Ascending aorta (tissue), 2 donors: ENCODE measurements at regions of chr1 and their contacts with region 1.

Region 1: DNA sequence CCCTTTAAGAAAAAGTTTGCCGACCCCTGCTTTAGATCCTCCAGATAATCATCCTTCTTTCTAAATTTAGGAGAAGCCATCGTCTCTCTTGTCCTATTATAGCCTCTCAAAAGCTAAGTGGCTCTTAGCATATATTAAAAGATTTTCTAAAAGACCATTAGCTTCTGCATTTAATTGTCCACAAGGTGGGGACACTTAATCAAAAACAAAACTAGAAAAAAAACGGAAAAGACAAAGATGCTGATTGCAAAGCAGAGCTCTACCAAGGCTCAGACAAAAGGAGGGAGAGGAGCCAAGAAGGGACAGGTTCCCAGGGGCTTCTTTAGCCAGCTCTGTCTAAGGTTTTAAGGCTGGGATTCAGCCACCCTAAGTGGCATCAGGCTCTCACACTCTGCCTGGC is 128.3 kb upstream of the HMGB4 start:
- DNase-seq: no peak
- H3K4me3 ChIP-seq: no peak overlapping the region
- H3K27ac ChIP-seq: no peak overlapping the region
- H3K4me1 ChIP-seq: no peaks in the 10 kb centered on the region
- H3K27me3 ChIP-seq: no peaks in the 10 kb centered on the region
- CTCF ChIP-seq: peak in 2 of 3 experiments; percentile 7 to 54

Region 2: GRCh38 chr1:33709783-33710718 is 25.6 kb before region 1 on chr1:
- intact Hi-C with region 1: no loop called
- DNase-seq: no peak
- H3K4me3 ChIP-seq: no peak overlapping the region
- H3K27ac ChIP-seq: no peak overlapping the region
- H3K4me1 ChIP-seq: no peaks in the 10 kb centered on the region
- H3K27me3 ChIP-seq: no peaks in the 10 kb centered on the region
- CTCF ChIP-seq: no peak

Region 3: DNA sequence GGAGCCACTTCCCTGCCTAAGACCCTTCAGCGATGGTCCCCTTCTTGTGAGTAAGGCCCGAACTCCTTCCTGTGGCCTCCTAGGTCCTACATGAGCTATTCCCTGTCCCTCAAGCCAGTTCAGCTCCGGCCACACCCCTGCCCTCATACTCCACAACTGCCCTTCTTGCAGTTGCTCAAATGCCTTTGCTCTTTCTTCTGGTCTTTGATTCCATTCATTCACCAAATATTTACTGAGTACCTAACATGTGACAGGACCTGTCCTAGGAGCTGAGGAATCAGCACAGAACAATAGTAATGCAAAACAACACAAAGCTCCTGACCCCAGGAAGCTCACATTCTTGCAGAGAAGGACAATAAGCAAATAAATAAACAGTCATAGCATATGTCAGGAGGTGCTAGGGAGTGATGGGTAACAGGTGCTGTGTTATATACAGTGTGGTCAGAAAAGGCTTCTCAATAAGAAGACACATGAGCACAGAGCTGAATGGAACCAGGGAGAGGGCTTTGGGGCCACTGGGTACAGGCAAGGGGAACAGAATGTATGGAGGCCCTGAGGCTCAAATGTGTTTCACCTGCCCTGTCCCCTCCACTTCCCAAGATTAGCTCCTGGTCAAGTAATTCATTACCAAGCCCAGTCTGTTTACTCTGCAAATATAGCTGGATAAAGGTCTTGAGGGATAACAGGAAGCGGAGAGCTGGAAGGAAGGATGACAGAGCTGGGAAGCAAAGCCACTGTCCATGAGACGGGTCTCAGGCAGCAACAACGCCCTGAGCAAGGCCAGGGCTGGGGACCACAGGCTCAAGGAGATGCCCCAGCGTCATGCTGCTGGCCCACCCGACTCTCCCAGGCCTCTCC is 284.3 kb after region 1 on chr1:
- intact Hi-C with region 1: loop called (anchors 5 kb)
- DNase-seq: no peak
- H3K4me3 ChIP-seq: no peak overlapping the region
- H3K27ac ChIP-seq: no peak overlapping the region
- H3K4me1 ChIP-seq: no peaks in the 10 kb centered on the region
- H3K27me3 ChIP-seq: no peaks in the 10 kb centered on the region
- CTCF ChIP-seq: no peak